ENCODE measurements at regions of chr20 and their contacts with region 1.

Region 1: DNA sequence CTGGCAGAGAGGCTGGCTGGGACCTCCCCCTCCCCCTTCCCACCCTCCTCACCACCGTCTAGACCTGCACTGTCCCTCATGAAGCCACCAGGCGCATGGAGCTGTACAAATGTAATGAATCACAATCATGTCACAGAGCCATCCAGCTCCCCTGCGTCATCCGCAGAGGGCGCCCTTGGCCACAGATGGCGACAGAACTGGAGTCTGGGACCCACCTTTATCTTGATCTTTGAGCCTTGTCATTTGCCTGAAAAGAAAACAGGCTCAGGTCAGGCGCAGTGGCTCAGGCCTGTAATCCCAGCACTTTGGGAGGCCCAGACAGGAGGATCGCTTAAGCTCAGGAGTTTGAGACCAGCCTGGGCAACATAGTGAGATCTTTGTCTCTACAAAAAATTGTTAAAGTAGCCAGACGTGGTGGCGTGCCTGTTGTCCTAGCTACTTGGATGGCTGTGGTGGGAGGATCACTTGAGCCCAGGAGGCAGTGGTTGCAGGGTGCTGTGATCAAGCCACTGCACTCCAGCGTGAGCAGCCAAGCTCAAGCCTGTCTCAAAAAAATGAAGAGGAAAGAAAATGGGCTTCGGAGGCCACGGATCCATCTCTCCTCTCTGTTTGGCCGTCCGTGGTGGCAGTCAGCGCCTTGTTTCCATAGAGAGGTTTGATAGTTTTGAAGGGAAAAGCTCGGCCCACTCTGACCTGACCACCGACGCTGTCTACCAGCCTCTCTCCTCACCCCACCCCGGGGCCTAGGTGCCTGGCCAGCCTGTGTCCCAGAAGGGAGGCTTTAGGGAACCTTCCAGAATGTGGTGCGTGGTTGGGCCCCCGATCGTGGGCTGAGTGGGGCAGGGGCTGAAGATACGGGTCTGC is 6.2 kb downstream of the COL9A3 start:
- DNase-seq: peak; percentile 89
- H3K4me3 Mint-ChIP-seq: peak overlapping the region; percentile 34
- H3K27ac Mint-ChIP-seq: no peak overlapping the region
- H3K4me1 Mint-ChIP-seq: peaks cover 24% of the 10 kb centered on the region
- H3K27me3 Mint-ChIP-seq: no peaks in the 10 kb centered on the region
- CTCF ChIP-seq: peak; percentile 39

Region 2: DNA sequence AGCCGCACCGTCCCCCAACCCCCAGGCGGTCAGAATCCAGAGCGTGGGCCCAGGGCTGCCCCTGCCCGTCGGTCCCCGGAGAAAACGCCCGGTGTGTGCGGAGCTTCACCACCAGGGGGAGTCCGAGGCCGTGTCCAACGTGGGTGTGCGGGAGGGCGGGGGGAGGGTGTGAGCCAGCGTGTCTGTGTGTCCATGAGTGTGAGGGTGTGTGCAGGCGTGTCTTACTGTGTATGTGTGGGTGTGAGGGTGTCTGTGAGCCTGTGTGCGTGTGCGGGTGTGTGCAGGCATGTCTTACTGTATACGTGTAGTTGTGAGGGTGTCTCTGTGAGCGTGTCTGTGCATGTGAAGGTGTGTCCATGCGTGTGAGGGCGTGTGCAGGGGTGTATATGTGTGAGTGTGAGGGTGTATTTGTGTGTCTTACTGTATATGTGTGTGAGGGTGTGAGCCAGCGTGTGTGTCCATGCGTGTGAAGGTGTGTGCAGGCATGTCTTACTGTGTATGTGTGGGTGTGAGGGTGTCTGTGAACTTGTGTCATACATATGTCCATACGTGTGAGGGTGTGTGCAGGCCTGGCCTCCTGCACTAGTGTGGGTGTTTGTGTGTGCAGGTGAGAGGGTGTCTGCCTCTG is 322.7 kb before region 1 on chr20:
- CTCF ChIA-PET with region 1: no interaction called
- intact Hi-C with region 1: no loop called
- DNase-seq: peak; percentile 90
- H3K4me3 Mint-ChIP-seq: no peak overlapping the region
- H3K27ac Mint-ChIP-seq: peak overlapping the region; percentile 1
- H3K4me1 Mint-ChIP-seq: peaks cover 20% of the 10 kb centered on the region
- H3K27me3 Mint-ChIP-seq: peaks cover 23% of the 10 kb centered on the region
- CTCF ChIP-seq: peak; percentile 93

Region 3: DNA sequence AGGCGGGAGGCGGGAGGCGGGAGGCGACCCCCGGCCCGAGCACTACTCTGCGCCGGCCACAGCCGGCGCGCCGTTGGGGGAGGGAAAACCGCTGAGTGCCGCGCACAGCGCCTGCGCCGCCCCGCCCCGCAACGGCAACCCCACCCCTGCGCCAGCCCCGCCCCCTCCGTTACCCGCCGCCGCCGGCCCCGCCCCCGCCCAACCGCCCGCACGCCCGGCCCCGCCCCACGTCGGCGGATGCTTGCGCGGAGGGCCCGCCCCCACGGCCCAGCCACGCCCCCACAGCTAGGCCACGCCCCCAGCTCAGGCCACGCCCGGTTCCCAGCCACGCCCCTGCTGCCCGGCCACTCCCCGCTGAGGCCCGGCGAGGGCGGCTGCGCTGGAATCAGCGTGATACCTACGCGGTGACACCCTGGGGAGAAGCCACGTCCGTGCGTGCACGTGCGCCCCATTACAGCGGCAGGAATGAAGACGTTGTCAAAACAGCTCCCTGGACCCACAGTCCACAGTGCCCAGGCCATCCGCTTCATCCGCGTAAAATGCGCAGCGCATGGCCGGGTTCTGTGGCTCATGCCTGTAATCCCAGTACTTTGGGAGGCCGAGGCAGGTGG is 38.8 kb after region 1 on chr20 and contains the start of gene TCFL5:
- CTCF ChIA-PET with region 1: interaction called, 10 read pairs
- intact Hi-C with region 1: loop called (anchors 1 kb)
- DNase-seq: peak; percentile 99
- H3K4me3 Mint-ChIP-seq: peak within 1 kb of the TSS; percentile 72
- H3K27ac Mint-ChIP-seq: no peak within 1 kb of the TSS
- H3K4me1 Mint-ChIP-seq: peaks cover 29% of the 10 kb centered on the region
- H3K27me3 Mint-ChIP-seq: peaks cover 45% of the 10 kb centered on the region
- CTCF ChIP-seq: no peak
- total RNA-seq, gene TCFL5: 18.9 and 22.3 TPM in 2 replicates

Region 4: GRCh38 chr20:62933981-62934380 is 111.0 kb after region 1 on chr20:
- CTCF ChIA-PET with region 1: interaction called, 10 read pairs
- intact Hi-C with region 1: no loop called
- DNase-seq: no peak
- H3K4me3 Mint-ChIP-seq: no peak overlapping the region
- H3K27ac Mint-ChIP-seq: no peak overlapping the region
- H3K4me1 Mint-ChIP-seq: peaks cover 8% of the 10 kb centered on the region
- H3K27me3 Mint-ChIP-seq: no peaks in the 10 kb centered on the region
- CTCF ChIP-seq: no peak

Region 5: DNA sequence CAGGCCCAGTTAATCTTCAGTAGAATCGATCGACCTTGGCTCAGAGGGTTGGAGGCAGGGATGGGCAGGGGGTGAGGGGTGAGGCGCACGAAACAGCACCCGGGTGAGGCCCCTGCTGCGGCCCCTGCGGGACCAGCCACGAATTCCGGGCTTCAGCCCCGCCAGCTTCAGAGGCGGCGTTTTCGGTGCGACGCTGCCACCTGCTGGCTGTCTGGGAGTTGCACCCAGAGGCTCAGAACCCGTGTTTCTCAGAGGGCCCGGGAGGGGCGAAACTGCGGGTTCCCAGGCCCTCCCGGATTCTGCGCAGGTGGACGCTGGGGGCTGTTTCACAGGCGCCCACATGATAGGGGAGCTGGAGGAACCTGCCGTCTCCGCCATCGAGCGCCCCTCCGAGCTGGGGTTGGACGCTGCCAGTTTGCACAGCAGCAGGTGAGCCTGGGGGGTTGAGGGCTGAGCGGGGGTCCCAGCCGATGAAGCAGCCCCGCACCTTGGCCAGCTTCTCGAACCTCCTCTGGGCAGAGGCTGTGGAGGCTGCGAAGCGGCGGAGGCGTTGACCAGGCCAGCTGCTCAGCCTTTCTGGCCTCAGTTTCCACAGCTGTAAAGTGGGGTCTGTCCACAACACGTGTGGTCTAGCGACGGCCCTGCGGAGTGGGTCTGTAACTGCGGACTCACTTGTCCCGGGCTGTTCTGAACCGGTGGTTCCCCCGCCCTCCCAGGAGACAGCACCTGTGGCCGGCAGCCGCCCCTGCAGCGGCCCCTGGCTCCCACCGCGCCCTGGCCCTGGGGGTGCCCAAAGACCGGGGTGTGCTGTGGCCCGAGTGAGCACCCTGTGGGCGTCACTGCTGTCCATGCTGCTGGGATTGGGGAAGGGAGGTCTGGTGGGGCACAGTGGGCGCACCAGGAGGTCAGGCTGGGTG is 186.3 kb after region 1 on chr20:
- CTCF ChIA-PET with region 1: interaction called, 10 read pairs
- intact Hi-C with region 1: no loop called
- DNase-seq: peak; percentile 91
- H3K4me3 Mint-ChIP-seq: peak overlapping the region; percentile 51
- H3K27ac Mint-ChIP-seq: no peak overlapping the region
- H3K4me1 Mint-ChIP-seq: peaks cover 13% of the 10 kb centered on the region
- H3K27me3 Mint-ChIP-seq: peaks cover 96% of the 10 kb centered on the region
- CTCF ChIP-seq: peak; percentile 97